ENCODE measurements at regions of chr15 and their contacts with region 1.

Region 1: GRCh38 chr15:98800437-98801233 is 152.3 kb downstream of the IGF1R start:
- DNase-seq: peak; percentile 48 to 90
- H3K4me3 ChIP-seq: peak overlapping the region in 2 of 4 donors; percentile 3 to 9
- H3K27ac ChIP-seq: peak overlapping the region; percentile 54 to 90 (median 84)
- H3K4me1 ChIP-seq: peaks cover 49 to 91% (median 79%) of the 10 kb centered on the region in 4 donors
- H3K27me3 ChIP-seq: no peaks in the 10 kb centered on the region
- CTCF ChIP-seq: no peak
- EP300 ChIP-seq: no peak
- POLR2A ChIP-seq: no peak

Region 2: DNA sequence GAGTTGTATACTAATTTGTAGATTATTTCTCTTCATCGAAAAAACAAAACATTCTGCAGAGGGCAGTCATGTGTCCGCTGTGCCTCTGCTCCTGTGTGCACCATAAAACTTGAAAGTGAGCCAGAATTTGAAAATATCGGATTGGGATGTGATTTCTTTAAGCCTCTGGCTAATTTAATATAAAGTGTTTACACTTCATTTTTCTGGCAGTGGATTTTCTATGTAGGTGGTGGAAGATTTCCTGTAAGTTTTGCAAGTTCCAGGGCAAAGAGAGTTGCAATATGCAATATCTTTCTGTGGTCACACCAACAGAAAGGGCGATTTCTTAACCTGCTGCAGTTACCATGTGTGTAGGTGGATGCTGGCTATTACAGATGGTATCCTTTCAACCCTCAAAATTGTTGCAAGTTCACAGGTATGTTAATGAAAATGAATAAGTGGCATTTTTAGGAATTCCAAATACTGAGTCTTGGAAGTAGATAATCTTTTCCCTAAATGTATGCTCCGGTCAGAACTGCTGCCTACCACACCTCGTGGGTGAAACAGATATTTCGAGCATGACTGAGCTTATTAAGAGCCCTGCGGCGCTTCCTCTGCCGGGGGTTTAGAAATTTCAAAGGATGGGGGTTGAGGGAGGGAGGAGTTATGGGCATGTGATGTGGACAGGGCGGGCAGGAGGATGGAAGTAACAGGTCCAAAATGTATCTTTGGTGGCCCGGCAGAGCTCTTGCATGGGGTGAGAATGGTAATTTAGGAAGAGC is 73.0 kb after region 1 on chr15:
- intact Hi-C with region 1: loop called (anchors 10 kb)
- DNase-seq: no peak
- H3K4me3 ChIP-seq: no peak overlapping the region
- H3K27ac ChIP-seq: peak overlapping the region in 4 of 5 donors; percentile 17 to 66 (median 48)
- H3K4me1 ChIP-seq: peaks cover 25 to 60% (median 44%) of the 10 kb centered on the region in 4 donors
- H3K27me3 ChIP-seq: no peaks in the 10 kb centered on the region
- CTCF ChIP-seq: no peak
- EP300 ChIP-seq: no peak
- POLR2A ChIP-seq: no peak

Region 3: DNA sequence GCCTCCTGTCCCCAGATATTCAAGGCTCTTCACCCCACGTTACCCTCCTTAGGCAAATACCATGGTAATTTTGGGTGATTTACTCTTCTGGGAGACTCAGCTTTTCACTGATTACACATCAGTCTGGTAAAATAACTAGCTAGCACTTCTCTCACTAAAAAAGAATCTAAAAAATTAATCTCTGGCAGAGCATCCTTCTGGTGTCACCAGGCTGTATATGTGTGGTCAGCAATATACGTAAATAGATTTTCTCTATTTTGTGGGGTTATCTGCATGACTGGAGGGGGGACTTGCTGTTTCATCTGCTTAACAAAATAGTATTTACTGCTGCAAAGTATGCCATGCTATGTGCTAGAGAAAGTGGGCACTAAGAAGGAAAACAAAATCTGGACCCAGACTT is 495.8 kb after region 1 on chr15:
- intact Hi-C with region 1: no loop called
- DNase-seq: no peak
- H3K4me3 ChIP-seq: no peak overlapping the region
- H3K27ac ChIP-seq: peak overlapping the region in 1 of 5 donors; percentile 2
- H3K4me1 ChIP-seq: peaks cover 0 to 8% (median 3%) of the 10 kb centered on the region in 4 donors
- H3K27me3 ChIP-seq: no peaks in the 10 kb centered on the region
- CTCF ChIP-seq: no peak
- EP300 ChIP-seq: no peak
- POLR2A ChIP-seq: no peak